CD4-positive, alpha-beta memory T cell (primary cell): ENCODE measurements at regions of chr19 and their contacts with region 1.

Region 1: DNA sequence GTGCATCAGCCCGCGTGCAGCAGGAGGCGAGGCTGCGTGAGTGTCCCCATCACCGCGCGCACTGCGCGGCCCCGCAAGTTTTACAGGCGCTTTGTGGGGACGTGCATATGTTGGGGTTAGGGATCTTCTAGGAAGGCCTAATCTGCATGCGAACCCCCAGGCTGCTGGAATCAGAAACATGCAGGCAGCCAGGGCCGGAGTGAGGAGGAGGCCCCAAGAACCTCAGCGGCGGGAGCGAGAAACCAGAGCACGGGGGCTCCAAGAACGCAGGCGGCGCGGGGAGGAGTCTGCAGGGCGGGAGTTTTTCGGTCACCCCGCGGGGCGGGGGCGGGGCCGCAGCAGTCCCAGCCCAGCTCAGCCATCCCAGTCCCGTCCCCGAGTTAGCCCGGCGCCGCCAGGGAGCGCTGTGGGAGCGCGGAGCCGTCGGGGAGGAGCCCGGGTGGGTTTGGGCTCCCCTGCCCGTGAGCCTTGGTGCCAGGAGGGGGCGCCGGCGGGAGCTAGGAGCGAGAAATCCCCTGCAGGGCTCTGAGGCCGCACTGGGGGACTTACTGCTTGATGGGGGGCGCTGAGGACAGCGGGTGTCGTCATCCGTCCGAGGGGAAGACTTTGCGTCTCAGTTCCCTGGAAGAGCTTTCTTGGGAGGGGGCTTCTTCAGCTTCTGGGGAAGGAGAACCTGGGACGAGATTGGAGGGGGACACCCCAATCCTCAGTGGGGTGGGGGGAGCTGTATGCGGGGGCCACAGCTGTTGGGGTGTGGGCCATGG is 933 bp upstream of the NRTN start:
- DNase-seq: peak; percentile 89 to 93 (median 91)
- H3K4me3 ChIP-seq: peak overlapping the region in 1 of 2 donors; percentile 40
- H3K4me3 Mint-ChIP-seq: peak overlapping the region; percentile 59 to 91 (median 76)
- H3K27ac ChIP-seq: peak overlapping the region; percentile 19
- H3K27ac Mint-ChIP-seq: peak overlapping the region; percentile 57 to 92 (median 87)
- H3K4me1 ChIP-seq: peaks cover 20% of the 10 kb centered on the region
- H3K4me1 Mint-ChIP-seq: peaks cover 6 to 30% (median 15%) of the 10 kb centered on the region in 4 donors
- H3K27me3 ChIP-seq: no peaks in the 10 kb centered on the region
- H3K27me3 Mint-ChIP-seq: peaks cover 13 to 14% of the 10 kb centered on the region in 2 donors

Region 2: DNA sequence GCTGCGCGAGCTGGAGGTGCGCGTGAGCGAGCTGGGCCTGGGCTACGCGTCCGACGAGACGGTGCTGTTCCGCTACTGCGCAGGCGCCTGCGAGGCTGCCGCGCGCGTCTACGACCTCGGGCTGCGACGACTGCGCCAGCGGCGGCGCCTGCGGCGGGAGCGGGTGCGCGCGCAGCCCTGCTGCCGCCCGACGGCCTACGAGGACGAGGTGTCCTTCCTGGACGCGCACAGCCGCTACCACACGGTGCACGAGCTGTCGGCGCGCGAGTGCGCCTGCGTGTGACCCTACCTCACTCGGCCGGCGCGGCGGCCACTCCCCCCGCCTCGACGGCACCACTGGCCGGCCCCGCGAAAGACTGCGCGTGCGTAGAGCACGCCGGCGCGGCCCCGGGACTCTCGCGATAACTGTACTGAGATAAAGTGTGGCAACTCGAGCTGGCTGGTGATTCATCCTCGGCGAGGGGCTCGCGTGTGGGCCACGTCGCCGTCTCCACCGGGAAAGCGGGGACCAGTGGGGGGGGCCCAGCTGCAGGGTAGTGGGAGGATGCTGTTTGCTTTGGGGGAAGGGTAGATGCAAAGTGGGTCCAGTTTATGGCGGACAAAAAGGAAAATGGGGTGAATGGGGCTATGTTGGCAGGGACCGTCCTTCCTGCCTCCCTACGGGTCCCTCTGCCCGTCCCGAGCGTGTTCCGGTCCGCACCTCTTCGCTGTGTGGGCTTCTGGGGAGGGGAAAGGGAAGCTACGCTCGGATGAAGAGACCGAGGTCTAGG is 24.1 kb after region 1 on chr19:
- CTCF ChIA-PET with region 1: interaction called, 22 read pairs
- POLR2A ChIA-PET with region 1: interaction called, 20 read pairs
- intact Hi-C with region 1: loop called (anchors 2 kb)
- DNase-seq: peak; percentile 91 to 96 (median 92)
- H3K4me3 ChIP-seq: peak overlapping the region; percentile 68 to 73
- H3K4me3 Mint-ChIP-seq: peak overlapping the region; percentile 92 to 99 (median 96)
- H3K27ac ChIP-seq: peak overlapping the region; percentile 49
- H3K27ac Mint-ChIP-seq: peak overlapping the region; percentile 95 to 97 (median 95)
- H3K4me1 ChIP-seq: peaks cover 22% of the 10 kb centered on the region
- H3K4me1 Mint-ChIP-seq: peaks cover 3 to 17% (median 10%) of the 10 kb centered on the region in 4 donors
- H3K27me3 ChIP-seq: no peaks in the 10 kb centered on the region
- H3K27me3 Mint-ChIP-seq: peaks cover 0 to 3% of the 10 kb centered on the region in 2 donors

Region 3: GRCh38 chr19:5891938-5892771 is 88.2 kb after region 1 on chr19:
- CTCF ChIA-PET with region 1: interaction called, 6 read pairs
- POLR2A ChIA-PET with region 1: no interaction called
- intact Hi-C with region 1: loop called (anchors 1 kb)
- DNase-seq: no peak
- H3K4me3 ChIP-seq: no peak overlapping the region
- H3K4me3 Mint-ChIP-seq: no peak overlapping the region
- H3K27ac ChIP-seq: no peak overlapping the region
- H3K27ac Mint-ChIP-seq: no peak overlapping the region
- H3K4me1 ChIP-seq: no peaks in the 10 kb centered on the region
- H3K4me1 Mint-ChIP-seq: peaks cover 0 to 3% (median under 1%) of the 10 kb centered on the region in 4 donors
- H3K27me3 ChIP-seq: no peaks in the 10 kb centered on the region
- H3K27me3 Mint-ChIP-seq: peaks cover 0 to 5% of the 10 kb centered on the region in 2 donors

Region 4: GRCh38 chr19:5961969-5962945 is 158.3 kb after region 1 on chr19:
- CTCF ChIA-PET with region 1: interaction called, 5 read pairs
- POLR2A ChIA-PET with region 1: interaction called, 3 read pairs
- intact Hi-C with region 1: loop called (anchors 1 kb)
- DNase-seq: peak; percentile 84 to 93 (median 88)
- H3K4me3 ChIP-seq: peak overlapping the region; percentile 11 to 42
- H3K4me3 Mint-ChIP-seq: peak overlapping the region; percentile 60 to 97 (median 82)
- H3K27ac ChIP-seq: peak overlapping the region; percentile 78
- H3K27ac Mint-ChIP-seq: peak overlapping the region; percentile 89 to 100 (median 99)
- H3K4me1 ChIP-seq: peaks cover 95% of the 10 kb centered on the region
- H3K4me1 Mint-ChIP-seq: peaks cover 53 to 99% (median 82%) of the 10 kb centered on the region in 4 donors
- H3K27me3 ChIP-seq: no peaks in the 10 kb centered on the region
- H3K27me3 Mint-ChIP-seq: no peaks in the 10 kb centered on the region

Region 5: DNA sequence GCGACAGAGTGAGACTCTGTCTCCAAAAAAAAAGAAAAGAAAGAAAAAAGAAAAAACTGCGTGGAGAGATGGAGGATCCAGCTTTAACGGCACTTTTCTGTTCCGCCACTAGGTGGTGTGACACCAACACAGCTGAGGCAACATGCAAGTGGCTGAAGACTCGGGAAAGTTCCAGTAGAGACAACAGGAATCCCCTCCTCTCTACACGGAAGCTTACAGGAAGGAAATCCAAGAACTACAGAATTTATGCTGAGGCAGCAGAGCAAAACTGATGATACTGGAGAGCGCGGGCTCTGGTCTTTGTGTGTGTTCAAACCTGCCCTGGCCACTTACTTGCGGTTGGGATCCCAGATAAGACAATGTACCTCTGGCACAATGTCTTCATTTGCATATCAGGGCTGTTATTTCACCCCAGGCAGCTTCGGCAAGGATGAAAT is 164.1 kb after region 1 on chr19:
- CTCF ChIA-PET with region 1: interaction called, 11 read pairs
- POLR2A ChIA-PET with region 1: no interaction called
- intact Hi-C with region 1: no loop called
- DNase-seq: peak; percentile 46 to 59 (median 56)
- H3K4me3 ChIP-seq: no peak overlapping the region
- H3K4me3 Mint-ChIP-seq: peak overlapping the region in 7 of 8 donors; percentile 9 to 73 (median 26)
- H3K27ac ChIP-seq: peak overlapping the region; percentile 43
- H3K27ac Mint-ChIP-seq: peak overlapping the region; percentile 28 to 94 (median 90)
- H3K4me1 ChIP-seq: peaks cover 95% of the 10 kb centered on the region
- H3K4me1 Mint-ChIP-seq: peaks cover 52 to 94% (median 72%) of the 10 kb centered on the region in 4 donors
- H3K27me3 ChIP-seq: no peaks in the 10 kb centered on the region
- H3K27me3 Mint-ChIP-seq: no peaks in the 10 kb centered on the region

Region 6: DNA sequence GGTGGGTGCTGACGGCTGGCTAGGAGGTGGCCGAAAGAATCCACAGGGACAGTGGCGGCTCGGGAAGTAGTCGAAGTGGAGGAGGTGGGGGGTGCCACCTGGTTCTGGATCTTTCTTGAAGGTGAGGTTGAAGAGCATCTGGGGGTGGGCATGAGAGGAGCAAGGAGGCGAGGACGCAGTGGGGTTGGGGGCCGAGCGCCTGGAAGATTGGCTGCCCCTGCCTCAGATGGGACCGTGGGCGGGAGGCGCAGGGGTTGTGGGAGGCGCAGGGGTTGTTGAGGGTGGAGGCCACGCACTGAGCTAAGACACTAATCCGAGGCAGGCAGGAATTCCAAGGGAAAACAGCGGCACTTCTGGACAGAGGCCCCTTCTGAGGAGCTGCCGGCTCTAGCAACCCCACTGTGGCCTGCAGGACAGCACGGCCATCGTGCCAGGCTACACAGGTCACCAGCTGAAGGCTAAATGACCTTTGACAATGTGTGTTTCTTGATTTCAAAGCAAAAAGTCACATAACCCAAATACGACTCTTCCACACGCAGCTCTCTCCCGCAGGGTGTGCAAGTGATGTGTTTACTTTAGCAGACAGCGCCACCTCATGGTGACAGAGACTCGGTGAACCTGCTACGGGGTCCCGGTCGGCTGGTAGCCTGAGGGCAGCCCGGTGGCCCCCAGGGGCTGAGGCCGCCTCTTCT is 218.1 kb after region 1 on chr19:
- CTCF ChIA-PET with region 1: interaction called, 51 read pairs
- POLR2A ChIA-PET with region 1: interaction called, 3 read pairs
- intact Hi-C with region 1: no loop called
- DNase-seq: peak; percentile 64 to 78 (median 73)
- H3K4me3 ChIP-seq: no peak overlapping the region
- H3K4me3 Mint-ChIP-seq: no peak overlapping the region
- H3K27ac ChIP-seq: no peak overlapping the region
- H3K27ac Mint-ChIP-seq: peak overlapping the region in 1 of 7 donors; percentile 57
- H3K4me1 ChIP-seq: peaks cover 4% of the 10 kb centered on the region
- H3K4me1 Mint-ChIP-seq: peaks cover 0 to 7% (median under 1%) of the 10 kb centered on the region in 4 donors
- H3K27me3 ChIP-seq: no peaks in the 10 kb centered on the region
- H3K27me3 Mint-ChIP-seq: peaks cover 0 to 2% of the 10 kb centered on the region in 2 donors